Activated CD4-positive, alpha-beta T cell treated with anti-CD3 and anti-CD28 coated beads for 36 hours (primary cell): ENCODE measurements at regions of chr19 and their contacts with region 1.

Region 1: DNA sequence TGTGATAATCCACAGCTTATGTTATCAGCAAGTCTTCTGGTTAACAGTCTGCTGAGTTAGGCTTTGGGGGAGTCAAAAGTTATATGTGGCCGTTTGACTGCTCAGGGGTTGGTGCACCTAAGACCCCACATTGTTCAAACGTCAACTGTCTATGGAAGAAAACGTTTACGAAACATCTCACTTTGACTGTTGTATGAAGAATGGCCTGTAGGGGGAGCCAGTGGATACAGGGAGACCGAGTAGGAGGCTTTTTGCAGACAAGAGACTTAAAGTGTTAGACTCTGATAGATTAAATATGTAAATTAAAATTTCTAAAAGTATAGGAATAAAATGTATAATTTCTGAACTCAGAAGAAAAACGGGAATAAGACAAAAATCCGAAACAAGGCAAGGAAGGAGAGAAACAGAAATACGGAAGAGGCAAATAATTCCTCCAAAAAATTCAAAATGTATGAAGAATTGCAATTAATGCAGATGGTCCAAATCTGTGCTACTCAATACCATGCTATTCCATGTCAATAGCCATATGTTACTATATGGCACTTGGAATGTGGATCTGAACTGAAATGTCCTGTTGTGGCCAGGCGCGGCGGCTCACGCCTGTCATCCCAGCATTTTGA is 37.8 kb downstream of the TNFSF14 start:
- DNase-seq: peak; percentile 87
- ATAC-seq: peak; percentile 87
- H3K4me3 Mint-ChIP-seq: no peak overlapping the region
- H3K27ac Mint-ChIP-seq: no peak overlapping the region
- H3K4me1 Mint-ChIP-seq: peaks cover 28% of the 10 kb centered on the region
- H3K27me3 Mint-ChIP-seq: peaks cover 6% of the 10 kb centered on the region

Region 2: GRCh38 chr19:6644796-6645195 is 12.7 kb after region 1 on chr19:
- CTCF ChIA-PET with region 1: interaction called, 14 read pairs
- POLR2A ChIA-PET with region 1: no interaction called
- intact Hi-C with region 1: no loop called
- DNase-seq: no peak
- ATAC-seq: no peak
- H3K4me3 Mint-ChIP-seq: no peak overlapping the region
- H3K27ac Mint-ChIP-seq: no peak overlapping the region
- H3K4me1 Mint-ChIP-seq: peaks cover 24% of the 10 kb centered on the region
- H3K27me3 Mint-ChIP-seq: no peaks in the 10 kb centered on the region

Region 3: GRCh38 chr19:6663236-6664201 is 31.4 kb after region 1 on chr19:
- CTCF ChIA-PET with region 1: interaction called, 6 read pairs
- POLR2A ChIA-PET with region 1: interaction called, 3 read pairs
- intact Hi-C with region 1: loop called in 1 of 2 experiments (anchors 2 kb)
- DNase-seq: peak; percentile 70
- ATAC-seq: peak; percentile 40
- H3K4me3 Mint-ChIP-seq: no peak overlapping the region
- H3K27ac Mint-ChIP-seq: no peak overlapping the region
- H3K4me1 Mint-ChIP-seq: peaks cover 19% of the 10 kb centered on the region
- H3K27me3 Mint-ChIP-seq: no peaks in the 10 kb centered on the region

Region 4: GRCh38 chr19:6718741-6719539 is 86.8 kb after region 1 on chr19:
- CTCF ChIA-PET with region 1: no interaction called
- POLR2A ChIA-PET with region 1: no interaction called
- intact Hi-C with region 1: loop called in 1 of 2 experiments (anchors 5 kb)
- DNase-seq: peak; percentile 59
- ATAC-seq: peak; percentile 82
- H3K4me3 Mint-ChIP-seq: no peak overlapping the region
- H3K27ac Mint-ChIP-seq: no peak overlapping the region
- H3K4me1 Mint-ChIP-seq: peaks cover 15% of the 10 kb centered on the region
- H3K27me3 Mint-ChIP-seq: peaks cover 8% of the 10 kb centered on the region

Region 5: GRCh38 chr19:6753178-6754031 is 121.3 kb after region 1 on chr19:
- CTCF ChIA-PET with region 1: no interaction called
- POLR2A ChIA-PET with region 1: no interaction called
- intact Hi-C with region 1: loop called in 1 of 2 experiments (anchors 1 kb)
- DNase-seq: peak; percentile 93
- ATAC-seq: peak; percentile 94
- H3K4me3 Mint-ChIP-seq: peak overlapping the region; percentile 59
- H3K27ac Mint-ChIP-seq: peak overlapping the region; percentile 47
- H3K4me1 Mint-ChIP-seq: peaks cover 13% of the 10 kb centered on the region
- H3K27me3 Mint-ChIP-seq: no peaks in the 10 kb centered on the region